Activated CD4-positive, alpha-beta T cell treated with anti-CD3 and anti-CD28 coated beads for 36 hours (primary cell): ENCODE measurements at regions of chr19 and their contacts with region 1.

Region 1: DNA sequence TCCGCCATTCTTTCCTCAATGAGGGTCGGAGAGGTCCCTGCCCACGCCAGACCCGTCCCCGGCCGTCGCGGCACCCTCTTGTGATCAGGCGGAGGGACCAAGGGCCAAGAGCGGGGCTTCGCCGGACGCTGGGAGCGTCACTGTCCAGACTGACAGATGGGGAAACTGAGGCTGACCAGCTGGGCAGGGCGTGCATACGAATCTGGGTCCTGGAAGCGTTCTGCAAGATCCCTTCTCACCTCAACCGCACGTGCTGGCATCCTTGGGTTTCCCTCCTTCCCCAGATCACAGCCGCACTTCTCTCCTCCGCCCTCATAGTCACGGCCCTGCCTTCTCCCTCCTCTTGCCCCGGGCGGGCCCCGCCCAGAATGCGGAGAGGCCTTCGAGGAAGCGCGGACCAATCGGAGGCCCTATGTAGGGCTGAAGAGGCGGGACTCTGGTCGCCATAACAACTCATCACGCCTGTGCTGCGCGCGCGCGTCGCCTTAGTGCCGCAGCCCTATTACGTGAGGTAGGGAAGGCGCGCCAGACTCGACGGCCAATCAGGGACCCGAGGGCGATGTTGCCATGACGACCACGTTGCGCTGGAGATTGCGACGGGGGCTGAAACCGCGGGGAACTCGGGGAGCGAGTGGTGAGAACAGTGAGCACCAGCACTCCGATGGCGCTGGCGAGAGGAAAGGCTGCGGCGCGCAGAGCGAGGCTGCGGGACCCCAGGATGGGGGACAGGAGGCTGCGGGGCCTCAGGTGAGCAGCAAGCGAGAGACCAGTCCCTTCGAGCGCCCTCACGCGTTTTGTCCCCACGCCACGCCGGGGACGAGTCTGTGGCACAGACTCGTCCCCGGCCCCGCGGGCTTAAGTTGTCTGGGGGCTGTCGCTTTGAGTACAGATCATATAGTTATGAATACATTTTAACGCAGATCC is 5.7 kb downstream of the RNF225 start:
- DNase-seq: peak; percentile 100
- ATAC-seq: peak; percentile 97
- H3K4me3 Mint-ChIP-seq: peak overlapping the region; percentile 82
- H3K27ac Mint-ChIP-seq: peak overlapping the region; percentile 61
- H3K4me1 Mint-ChIP-seq: peaks cover 14% of the 10 kb centered on the region
- H3K27me3 Mint-ChIP-seq: peaks cover 2% of the 10 kb centered on the region

Region 2: GRCh38 chr19:57664269-57665127 is 736.7 kb before region 1 on chr19:
- CTCF ChIA-PET with region 1: no interaction called
- POLR2A ChIA-PET with region 1: no interaction called
- intact Hi-C with region 1: no loop called
- DNase-seq: peak; percentile 24
- ATAC-seq: peak; percentile 47
- H3K4me3 Mint-ChIP-seq: peak overlapping the region; percentile 70
- H3K27ac Mint-ChIP-seq: no peak overlapping the region
- H3K4me1 Mint-ChIP-seq: peaks cover 3% of the 10 kb centered on the region
- H3K27me3 Mint-ChIP-seq: peaks cover 36% of the 10 kb centered on the region

Region 3: DNA sequence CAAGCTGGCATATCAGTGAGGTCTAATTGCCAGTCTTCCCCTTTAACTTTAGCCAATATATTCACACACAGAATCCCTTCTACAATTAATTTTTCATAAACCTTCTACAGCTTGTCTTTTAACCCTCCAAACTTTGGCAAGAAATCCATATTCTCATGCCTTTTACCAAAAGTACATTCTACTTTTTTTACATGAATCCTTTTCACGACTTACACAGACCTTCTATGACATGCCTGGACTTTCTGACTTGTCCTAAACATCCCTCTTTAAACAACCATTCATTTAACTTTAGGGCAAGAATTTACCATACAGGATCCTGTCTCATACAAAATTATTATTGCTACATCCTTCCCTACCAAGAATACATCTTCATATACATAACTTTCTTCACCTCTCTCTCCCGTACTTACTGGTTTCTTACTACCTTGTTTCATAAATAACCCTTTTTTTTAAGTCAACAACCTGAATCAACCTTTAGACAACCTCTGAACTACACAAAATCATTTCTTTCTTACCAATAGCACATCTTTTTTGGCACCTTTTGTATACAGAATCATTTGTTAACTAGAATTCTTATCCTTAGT is 149.0 kb before region 1 on chr19:
- CTCF ChIA-PET with region 1: no interaction called
- POLR2A ChIA-PET with region 1: no interaction called
- intact Hi-C with region 1: no loop called
- DNase-seq: no peak
- ATAC-seq: no peak
- H3K4me3 Mint-ChIP-seq: no peak overlapping the region
- H3K27ac Mint-ChIP-seq: no peak overlapping the region
- H3K4me1 Mint-ChIP-seq: peaks cover 7% of the 10 kb centered on the region
- H3K27me3 Mint-ChIP-seq: no peaks in the 10 kb centered on the region

Region 4: DNA sequence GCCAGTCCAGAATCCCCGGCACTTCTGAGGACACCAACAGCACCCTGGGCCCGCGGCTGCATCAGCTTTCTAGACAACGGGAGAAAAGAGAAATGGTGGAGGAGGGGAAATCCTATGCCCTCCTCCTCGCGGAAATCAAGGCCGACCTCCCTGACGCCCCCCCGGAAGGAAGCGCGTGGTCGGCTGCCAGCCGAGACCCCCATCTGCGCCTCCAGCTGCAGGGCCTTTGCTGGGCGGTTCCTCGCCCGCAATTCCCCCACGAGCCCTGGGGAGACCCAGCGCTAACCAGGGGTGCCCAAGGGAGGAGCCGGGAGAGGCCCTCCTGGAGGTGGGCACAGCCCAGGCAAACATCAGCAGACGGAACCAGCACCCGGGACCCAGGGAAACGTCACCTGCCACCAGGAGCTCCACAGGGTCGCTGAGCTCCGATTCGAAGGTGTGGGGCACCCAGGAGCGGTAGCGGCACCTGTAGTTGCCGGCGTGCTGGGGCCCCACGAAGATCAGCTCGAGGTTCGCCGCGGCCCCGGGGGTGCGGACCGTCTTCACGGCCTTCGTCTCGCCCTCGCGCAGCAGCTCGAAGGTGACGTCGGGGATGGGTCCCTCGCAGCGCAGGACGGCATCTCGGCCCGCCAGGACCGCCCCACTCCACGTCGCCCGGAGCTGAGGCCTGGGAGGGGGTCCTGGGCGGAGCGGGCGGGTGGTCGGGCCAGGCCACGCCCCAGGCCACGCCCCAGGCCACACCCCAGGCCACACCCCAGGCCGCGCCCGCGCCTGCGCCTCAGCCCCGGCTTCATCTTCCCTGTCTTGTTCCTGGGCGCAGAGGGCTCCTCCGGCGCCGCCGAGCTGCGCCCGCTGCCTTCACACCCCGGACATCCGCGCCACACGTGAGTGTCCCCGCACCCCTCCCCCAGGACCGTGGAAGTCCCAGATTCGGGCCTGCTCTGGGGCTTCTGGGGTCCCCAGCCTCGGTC is 53.9 kb before region 1 on chr19:
- CTCF ChIA-PET with region 1: no interaction called
- POLR2A ChIA-PET with region 1: no interaction called
- intact Hi-C with region 1: loop called in 1 of 2 experiments (anchors 1 kb)
- DNase-seq: peak; percentile 87
- ATAC-seq: peak; percentile 97
- H3K4me3 Mint-ChIP-seq: peak overlapping the region; percentile 87
- H3K27ac Mint-ChIP-seq: peak overlapping the region; percentile 70
- H3K4me1 Mint-ChIP-seq: peaks cover 16% of the 10 kb centered on the region
- H3K27me3 Mint-ChIP-seq: peaks cover 10% of the 10 kb centered on the region

Region 5: GRCh38 chr19:58386576-58387337 is 14.4 kb before region 1 on chr19 and contains the start of gene RPS5:
- CTCF ChIA-PET with region 1: no interaction called
- POLR2A ChIA-PET with region 1: no interaction called
- intact Hi-C with region 1: loop called (anchors 1 to 2 kb)
- DNase-seq: peak; percentile 97
- ATAC-seq: peak; percentile 96
- H3K4me3 Mint-ChIP-seq: peak within 1 kb of the TSS; percentile 96
- H3K27ac Mint-ChIP-seq: peak within 1 kb of the TSS; percentile 97
- H3K4me1 Mint-ChIP-seq: peaks cover 33% of the 10 kb centered on the region
- H3K27me3 Mint-ChIP-seq: no peaks in the 10 kb centered on the region
- total RNA-seq, gene RPS5: 1,234 to 1,535 TPM

Region 6: GRCh38 chr19:58434217-58434616 is 33.0 kb after region 1 on chr19:
- CTCF ChIA-PET with region 1: no interaction called
- POLR2A ChIA-PET with region 1: no interaction called
- intact Hi-C with region 1: no loop called
- DNase-seq: no peak
- ATAC-seq: no peak
- H3K4me3 Mint-ChIP-seq: no peak overlapping the region
- H3K27ac Mint-ChIP-seq: no peak overlapping the region
- H3K4me1 Mint-ChIP-seq: peaks cover 14% of the 10 kb centered on the region
- H3K27me3 Mint-ChIP-seq: no peaks in the 10 kb centered on the region

Region 7: DNA sequence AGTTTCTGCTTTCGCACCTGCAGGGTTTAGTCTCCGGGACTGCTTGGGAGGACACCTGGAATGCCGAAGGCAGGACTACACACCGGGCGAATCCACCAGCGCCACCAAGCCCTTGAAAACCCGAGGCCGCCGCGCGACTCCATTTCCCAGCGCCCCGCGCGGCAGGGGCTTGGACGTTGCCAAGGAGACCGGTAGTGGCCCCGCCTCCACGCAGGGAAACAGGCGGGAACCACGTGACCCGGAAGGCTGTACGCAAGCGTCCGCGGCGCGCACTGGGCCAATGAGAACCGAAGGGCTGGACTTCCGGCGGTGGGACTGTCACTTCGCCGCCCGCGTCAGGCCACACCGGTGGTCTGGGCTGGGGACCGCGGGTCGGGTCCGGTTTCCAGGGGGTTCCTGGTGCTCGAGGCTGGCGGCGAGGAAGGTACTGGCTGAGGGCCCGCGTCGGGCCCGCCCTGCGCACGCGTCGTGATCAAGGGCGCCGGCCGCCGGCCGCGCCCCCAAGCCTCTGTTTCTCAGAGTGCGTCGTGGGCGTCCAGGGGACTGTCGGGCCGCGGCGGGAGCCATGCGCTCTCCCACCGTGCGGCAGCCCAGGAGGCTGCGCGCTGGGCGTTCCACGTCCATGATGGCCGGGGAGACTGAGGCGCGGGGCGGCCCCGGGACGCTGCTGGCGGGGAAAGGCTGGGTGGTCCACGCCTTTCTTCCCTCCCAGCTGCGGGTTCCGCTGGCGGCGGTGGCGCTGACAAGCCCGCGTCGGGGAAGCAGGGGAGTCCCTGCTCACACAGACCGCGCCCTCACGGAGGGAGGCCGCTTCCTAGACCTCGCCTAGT is 65.8 kb after region 1 on chr19 and contains the start of gene ZNF324:
- CTCF ChIA-PET with region 1: no interaction called
- POLR2A ChIA-PET with region 1: no interaction called
- intact Hi-C with region 1: loop called in 1 of 2 experiments (anchors 1 kb)
- DNase-seq: peak; percentile 99
- ATAC-seq: peak; percentile 98
- H3K4me3 Mint-ChIP-seq: peak within 1 kb of the TSS; percentile 86
- H3K27ac Mint-ChIP-seq: peak within 1 kb of the TSS; percentile 47
- H3K4me1 Mint-ChIP-seq: peaks cover 22% of the 10 kb centered on the region
- H3K27me3 Mint-ChIP-seq: peaks cover 2% of the 10 kb centered on the region
- total RNA-seq, gene ZNF324: 4.7 to 7.5 TPM

Region 8: GRCh38 chr19:58572818-58573657 is 171.9 kb after region 1 on chr19 and contains the start of gene MZF1:
- CTCF ChIA-PET with region 1: no interaction called
- POLR2A ChIA-PET with region 1: no interaction called
- intact Hi-C with region 1: loop called in 1 of 2 experiments (anchors 1 kb)
- DNase-seq: peak; percentile 100
- ATAC-seq: peak; percentile 69
- H3K4me3 Mint-ChIP-seq: peak within 1 kb of the TSS; percentile 95
- H3K27ac Mint-ChIP-seq: peak within 1 kb of the TSS; percentile 100
- H3K4me1 Mint-ChIP-seq: peaks cover 38% of the 10 kb centered on the region
- H3K27me3 Mint-ChIP-seq: no peaks in the 10 kb centered on the region
- total RNA-seq, gene MZF1: 14.3 to 15.0 TPM